ENCODE measurements at regions of chr11 and their contacts with region 1.

Region 1: GRCh38 chr11:113447621-113448315 is 27.4 kb downstream of the DRD2 start:
- DNase-seq: peak; percentile 93
- H3K4me3 ChIP-seq: no peak overlapping the region
- H3K27ac ChIP-seq: peak overlapping the region; percentile 97
- H3K4me1 ChIP-seq: peaks cover 35% of the 10 kb centered on the region
- H3K27me3 ChIP-seq: no peaks in the 10 kb centered on the region
- CTCF ChIP-seq: no peak

Region 2: DNA sequence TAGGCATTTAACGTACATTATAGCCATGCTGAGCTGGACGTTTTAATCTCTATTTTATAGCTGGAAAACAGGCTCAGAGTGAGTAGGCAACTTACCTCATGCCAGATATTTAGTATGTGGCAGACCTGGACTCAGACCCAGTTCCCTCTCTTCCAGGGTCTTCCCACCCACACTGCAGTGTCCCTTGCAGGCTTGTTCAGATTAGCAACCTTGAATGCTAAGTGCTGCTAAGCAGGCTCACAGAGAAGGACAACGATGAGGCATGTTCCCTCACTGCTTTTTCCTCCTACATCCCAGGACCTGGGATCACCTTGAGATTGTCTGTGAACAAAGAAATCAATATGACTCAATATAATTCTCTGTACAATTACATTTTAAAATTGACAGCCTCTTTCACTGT is 421.0 kb before region 1 on chr11:
- CTCF ChIA-PET with region 1: no interaction called
- dilution Hi-C with region 1: no loop called
- in situ Hi-C with region 1: no loop called
- intact Hi-C with region 1: no loop called
- DNase-seq: no peak
- H3K4me3 ChIP-seq: no peak overlapping the region
- H3K27ac ChIP-seq: no peak overlapping the region
- H3K4me1 ChIP-seq: peaks cover 11% of the 10 kb centered on the region
- H3K27me3 ChIP-seq: no peaks in the 10 kb centered on the region
- CTCF ChIP-seq: no peak

Region 3: DNA sequence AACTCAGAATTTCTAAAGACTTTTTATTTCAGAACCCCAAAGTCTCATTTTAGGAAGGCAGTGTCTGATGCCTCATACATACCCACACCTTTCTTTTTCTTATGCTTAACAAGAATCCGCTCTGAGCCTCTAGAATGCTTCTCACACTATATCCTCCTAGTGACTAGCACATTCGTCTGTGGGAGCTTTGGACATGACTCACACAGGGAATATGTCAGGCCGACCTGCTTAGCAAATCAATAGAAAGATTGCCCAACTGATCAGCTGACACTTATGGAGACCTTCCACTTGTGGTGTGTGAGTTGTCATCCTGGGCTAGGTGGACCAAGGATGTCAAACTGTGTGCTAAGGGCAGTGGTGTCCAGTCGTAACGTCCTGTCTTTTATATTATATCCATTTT is 263.3 kb before region 1 on chr11:
- CTCF ChIA-PET with region 1: no interaction called
- dilution Hi-C with region 1: no loop called
- in situ Hi-C with region 1: no loop called
- intact Hi-C with region 1: no loop called
- DNase-seq: peak; percentile 95
- H3K4me3 ChIP-seq: no peak overlapping the region
- H3K27ac ChIP-seq: peak overlapping the region; percentile 58
- H3K4me1 ChIP-seq: peaks cover 13% of the 10 kb centered on the region
- H3K27me3 ChIP-seq: no peaks in the 10 kb centered on the region
- CTCF ChIP-seq: no peak

Region 4: DNA sequence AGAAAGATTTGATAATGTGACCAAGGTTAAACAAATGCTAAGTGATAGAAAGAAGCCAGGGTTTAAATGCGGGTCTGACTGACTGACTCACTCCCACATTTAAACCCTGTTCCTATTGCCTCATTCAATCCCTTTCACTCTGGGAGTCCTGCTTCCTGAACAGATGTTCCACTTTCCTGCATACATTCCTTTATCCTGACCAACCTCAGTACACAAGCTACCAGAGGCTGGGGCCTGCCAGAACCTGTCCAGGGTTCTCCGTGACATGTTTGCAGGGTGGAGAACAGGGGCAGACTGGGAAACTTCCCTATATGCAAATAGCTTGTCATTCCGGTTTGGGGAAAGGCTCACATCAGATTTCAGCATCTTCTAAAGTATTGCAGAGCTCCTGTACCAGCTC is 63.2 kb before region 1 on chr11:
- CTCF ChIA-PET with region 1: no interaction called
- dilution Hi-C with region 1: loop called (anchors 5 kb)
- in situ Hi-C with region 1: no loop called
- intact Hi-C with region 1: loop called (anchors 5 kb)
- DNase-seq: peak; percentile 100
- H3K4me3 ChIP-seq: no peak overlapping the region
- H3K27ac ChIP-seq: peak overlapping the region; percentile 85
- H3K4me1 ChIP-seq: peaks cover 41% of the 10 kb centered on the region
- H3K27me3 ChIP-seq: no peaks in the 10 kb centered on the region
- CTCF ChIP-seq: no peak

Region 5: GRCh38 chr11:113474362-113475159 is 26.8 kb after region 1 on chr11:
- CTCF ChIA-PET with region 1: no interaction called
- dilution Hi-C with region 1: no loop called
- in situ Hi-C with region 1: no loop called
- intact Hi-C with region 1: loop called (anchors 2 kb)
- DNase-seq: peak; percentile 84
- H3K4me3 ChIP-seq: peak overlapping the region; percentile 49 to 59 (median 50)
- H3K27ac ChIP-seq: peak overlapping the region; percentile 16
- H3K4me1 ChIP-seq: peaks cover 14% of the 10 kb centered on the region
- H3K27me3 ChIP-seq: no peaks in the 10 kb centered on the region
- CTCF ChIP-seq: no peak

Region 6: DNA sequence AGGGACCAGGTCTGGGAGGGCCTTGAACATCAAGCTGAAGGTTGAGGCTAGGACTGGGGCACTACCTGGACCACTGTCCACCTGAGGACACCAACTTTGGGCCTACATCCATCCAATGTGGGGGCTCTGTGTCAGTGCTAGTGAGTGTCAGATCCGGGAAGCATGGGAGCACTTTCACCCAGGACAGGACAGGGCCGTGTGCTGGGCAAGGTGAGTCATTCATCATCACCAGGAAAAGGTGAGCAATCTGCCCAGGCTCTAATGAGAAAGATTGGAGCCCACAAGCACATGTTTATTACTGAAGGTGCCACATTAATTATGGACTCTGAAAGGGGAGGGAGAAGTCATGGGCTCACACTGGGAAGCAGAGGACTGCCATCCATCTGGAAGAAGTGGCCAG is 67.1 kb after region 1 on chr11:
- CTCF ChIA-PET with region 1: no interaction called
- dilution Hi-C with region 1: loop called (anchors 5 kb)
- in situ Hi-C with region 1: no loop called
- intact Hi-C with region 1: no loop called
- DNase-seq: peak; percentile 68
- H3K4me3 ChIP-seq: no peak overlapping the region
- H3K27ac ChIP-seq: peak overlapping the region; percentile 26
- H3K4me1 ChIP-seq: peaks cover 25% of the 10 kb centered on the region
- H3K27me3 ChIP-seq: no peaks in the 10 kb centered on the region
- CTCF ChIP-seq: no peak

Region 7: GRCh38 chr11:113540416-113541330 is 92.9 kb after region 1 on chr11:
- CTCF ChIA-PET with region 1: no interaction called
- dilution Hi-C with region 1: loop called (anchors 5 kb)
- in situ Hi-C with region 1: no loop called
- intact Hi-C with region 1: no loop called
- DNase-seq: no peak
- H3K4me3 ChIP-seq: no peak overlapping the region
- H3K27ac ChIP-seq: no peak overlapping the region
- H3K4me1 ChIP-seq: no peaks in the 10 kb centered on the region
- H3K27me3 ChIP-seq: no peaks in the 10 kb centered on the region
- CTCF ChIP-seq: peak in 1 of 2 donors; percentile 7

Region 8: GRCh38 chr11:113926273-113927197 is 478.8 kb after region 1 on chr11:
- CTCF ChIA-PET with region 1: no interaction called
- dilution Hi-C with region 1: no loop called
- in situ Hi-C with region 1: no loop called
- intact Hi-C with region 1: no loop called
- DNase-seq: peak; percentile 11
- H3K4me3 ChIP-seq: no peak overlapping the region
- H3K27ac ChIP-seq: no peak overlapping the region
- H3K4me1 ChIP-seq: no peaks in the 10 kb centered on the region
- H3K27me3 ChIP-seq: no peaks in the 10 kb centered on the region
- CTCF ChIP-seq: no peak

Measured in mammary epithelial cell (primary cell).